Ascending aorta (tissue), 2 donors: ENCODE measurements at regions of chr17 and their contacts with region 1.

Region 1: GRCh38 chr17:73255671-73256181 is 6.0 kb downstream of the CPSF4L start:
- DNase-seq: no peak
- H3K4me3 ChIP-seq: no peak overlapping the region
- H3K27ac ChIP-seq: no peak overlapping the region
- H3K4me1 ChIP-seq: no peaks in the 10 kb centered on the region
- H3K27me3 ChIP-seq: no peaks in the 10 kb centered on the region
- CTCF ChIP-seq: peak; percentile 93 to 98 (median 95)

Region 2: GRCh38 chr17:73192894-73193701 is 62.6 kb before region 1 on chr17 and contains the start of gene COG1:
- intact Hi-C with region 1: no loop called
- DNase-seq: peak; percentile 29 to 92
- H3K4me3 ChIP-seq: peak within 1 kb of the TSS; percentile 91 to 93
- H3K27ac ChIP-seq: peak within 1 kb of the TSS; percentile 91 to 92
- H3K4me1 ChIP-seq: peaks cover 4 to 6% of the 10 kb centered on the region in 2 donors
- H3K27me3 ChIP-seq: no peaks in the 10 kb centered on the region
- CTCF ChIP-seq: no peak
- total RNA-seq, gene COG1: 35.9 TPM

Region 3: DNA sequence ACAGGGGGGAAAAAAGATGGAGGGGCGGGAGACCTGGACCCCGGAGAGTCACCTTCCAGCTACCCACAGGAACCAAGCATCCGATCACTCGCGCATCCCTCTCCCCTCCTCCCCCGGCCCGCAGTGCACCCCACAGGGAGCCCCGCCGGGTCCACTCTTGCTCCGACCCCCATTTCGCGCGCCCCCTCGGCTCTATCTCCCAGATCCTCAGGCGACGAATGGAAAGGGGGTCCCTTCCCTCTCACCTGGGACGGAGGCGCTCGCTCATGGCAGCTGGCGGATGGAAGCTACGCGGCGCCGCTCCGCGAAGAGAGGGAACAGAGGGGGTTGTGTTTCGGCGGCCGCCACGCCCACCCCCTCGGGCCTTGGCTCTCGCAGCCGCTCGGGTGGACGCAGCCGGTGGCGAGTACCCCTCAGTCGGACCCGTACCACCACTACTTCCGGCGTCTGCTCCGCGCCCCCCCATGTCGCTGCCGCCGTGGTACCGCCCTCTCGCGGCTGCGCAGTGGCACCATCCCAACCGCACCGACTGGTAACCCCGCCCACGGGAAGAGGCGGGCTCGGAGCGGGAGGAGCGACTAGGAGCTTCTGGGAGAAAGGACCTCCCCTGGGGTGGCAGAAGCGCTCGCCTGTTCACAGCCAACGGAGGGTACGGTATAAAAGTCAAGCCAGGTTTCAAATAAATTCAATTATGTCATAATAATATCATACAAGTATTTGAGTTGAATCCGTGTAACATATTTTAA is 23.7 kb before region 1 on chr17:
- intact Hi-C with region 1: no loop called
- DNase-seq: peak; percentile 83 to 97
- H3K4me3 ChIP-seq: peak overlapping the region; percentile 87 to 96
- H3K27ac ChIP-seq: peak overlapping the region; percentile 83 to 85
- H3K4me1 ChIP-seq: peaks cover 5 to 27% of the 10 kb centered on the region in 2 donors
- H3K27me3 ChIP-seq: no peaks in the 10 kb centered on the region
- CTCF ChIP-seq: peak; percentile 27 to 39 (median 31)

Region 4: GRCh38 chr17:73278465-73279453 is 23.0 kb after region 1 on chr17:
- intact Hi-C with region 1: no loop called
- DNase-seq: no peak
- H3K4me3 ChIP-seq: peak overlapping the region; percentile 10 to 11
- H3K27ac ChIP-seq: peak overlapping the region; percentile 62 to 65
- H3K4me1 ChIP-seq: peaks cover 0 to 21% of the 10 kb centered on the region in 2 donors
- H3K27me3 ChIP-seq: no peaks in the 10 kb centered on the region
- CTCF ChIP-seq: no peak

Region 5: GRCh38 chr17:73371285-73371684 is 115.6 kb after region 1 on chr17:
- intact Hi-C with region 1: loop called (anchors 1 kb)
- DNase-seq: no peak
- H3K4me3 ChIP-seq: no peak overlapping the region
- H3K27ac ChIP-seq: no peak overlapping the region
- H3K4me1 ChIP-seq: no peaks in the 10 kb centered on the region
- H3K27me3 ChIP-seq: no peaks in the 10 kb centered on the region
- CTCF ChIP-seq: no peak

Region 6: GRCh38 chr17:74220946-74221818 is 965.5 kb after region 1 on chr17:
- intact Hi-C with region 1: no loop called
- DNase-seq: no peak
- H3K4me3 ChIP-seq: no peak overlapping the region
- H3K27ac ChIP-seq: no peak overlapping the region
- H3K4me1 ChIP-seq: no peaks in the 10 kb centered on the region
- H3K27me3 ChIP-seq: no peaks in the 10 kb centered on the region
- CTCF ChIP-seq: no peak